Vagina (tissue), 2 donors: ENCODE measurements at regions of chr3 and their contacts with region 1.

Region 1: DNA sequence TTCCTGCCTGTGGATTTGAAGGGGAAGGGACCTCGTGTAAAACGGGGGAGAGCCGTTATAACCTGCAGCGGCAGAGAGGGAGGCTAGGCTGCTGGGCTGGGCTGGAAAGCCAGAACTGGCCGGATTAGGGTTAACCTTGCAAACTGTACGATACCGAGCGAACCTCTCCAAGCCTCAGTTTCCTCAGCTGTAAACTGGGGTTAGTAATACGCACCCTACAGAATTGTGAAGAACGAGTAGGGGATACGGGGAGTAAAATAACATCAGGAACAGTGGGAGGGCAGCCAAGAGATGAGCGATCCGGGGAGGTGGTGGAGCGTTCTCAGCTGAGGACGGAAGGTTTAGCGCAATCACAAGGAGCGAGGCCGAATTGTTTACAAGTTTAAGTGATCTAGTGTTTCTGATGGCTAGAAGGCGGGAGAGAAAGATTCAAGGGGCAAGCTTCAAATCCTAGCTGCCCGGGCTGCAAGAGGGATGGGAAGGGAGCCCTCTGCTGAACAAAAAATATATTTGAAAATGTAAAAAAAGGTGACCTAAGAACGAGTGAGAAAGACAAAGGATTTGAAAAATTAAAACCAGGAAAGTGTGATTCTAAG is 768 bp upstream of the SEMA5B start:
- DNase-seq: no peak
- H3K4me3 ChIP-seq: peak overlapping the region; percentile 42 to 60
- H3K27ac ChIP-seq: peak overlapping the region; percentile 3
- H3K4me1 ChIP-seq: peaks cover 23% of the 10 kb centered on the region
- H3K27me3 ChIP-seq: no peaks in the 10 kb centered on the region
- CTCF ChIP-seq: peak; percentile 6 to 39 (median 23)
- POLR2A ChIP-seq: no peak

Region 2: DNA sequence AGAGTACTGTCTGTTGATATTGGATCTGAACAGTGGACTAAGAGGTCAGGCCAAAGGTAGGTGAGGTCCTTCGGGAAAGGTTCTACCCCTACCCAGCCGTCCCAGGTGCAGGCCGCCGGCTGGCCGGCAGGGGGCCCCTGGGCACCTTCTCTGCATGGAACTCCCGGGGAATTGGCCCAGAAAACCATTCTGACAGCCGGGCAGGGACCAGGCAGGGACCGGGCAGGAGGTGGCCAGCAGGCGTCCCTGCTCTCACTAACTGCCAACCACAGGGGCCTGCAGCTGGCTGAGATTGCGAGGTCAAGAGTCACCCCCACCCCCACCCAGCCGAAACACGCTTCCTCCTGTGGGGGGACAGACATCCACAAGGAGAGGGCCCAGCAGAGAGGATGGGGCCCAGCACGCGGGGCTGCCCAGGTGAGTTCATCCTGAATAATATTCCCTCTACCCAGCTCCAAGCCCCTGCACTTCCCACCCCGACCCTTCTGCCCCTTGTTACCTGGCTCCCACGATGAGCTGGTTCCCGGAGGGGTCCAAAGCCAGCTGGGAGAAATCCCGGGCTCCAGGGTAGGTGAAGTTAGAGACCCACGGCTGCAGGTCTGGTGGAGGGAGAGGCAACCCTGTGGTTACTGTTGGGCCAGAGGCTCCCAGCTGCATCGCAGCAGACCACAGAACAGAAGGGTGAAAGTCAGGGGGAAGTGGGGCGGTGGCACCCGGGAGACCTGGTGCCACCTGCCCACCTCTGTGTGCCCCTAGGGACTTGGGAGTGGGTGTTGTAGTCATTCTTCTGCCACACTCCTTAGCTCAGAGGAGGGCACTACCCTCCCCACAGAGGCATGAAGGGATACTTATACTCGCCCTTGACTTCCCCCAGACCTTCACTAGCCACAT is 85.1 kb before region 1 on chr3:
- intact Hi-C with region 1: loop called (anchors 5 kb)
- DNase-seq: no peak
- H3K4me3 ChIP-seq: no peak overlapping the region
- H3K27ac ChIP-seq: no peak overlapping the region
- H3K4me1 ChIP-seq: no peaks in the 10 kb centered on the region
- H3K27me3 ChIP-seq: no peaks in the 10 kb centered on the region
- CTCF ChIP-seq: peak; percentile 23 to 43 (median 40)
- POLR2A ChIP-seq: no peak

Region 3: DNA sequence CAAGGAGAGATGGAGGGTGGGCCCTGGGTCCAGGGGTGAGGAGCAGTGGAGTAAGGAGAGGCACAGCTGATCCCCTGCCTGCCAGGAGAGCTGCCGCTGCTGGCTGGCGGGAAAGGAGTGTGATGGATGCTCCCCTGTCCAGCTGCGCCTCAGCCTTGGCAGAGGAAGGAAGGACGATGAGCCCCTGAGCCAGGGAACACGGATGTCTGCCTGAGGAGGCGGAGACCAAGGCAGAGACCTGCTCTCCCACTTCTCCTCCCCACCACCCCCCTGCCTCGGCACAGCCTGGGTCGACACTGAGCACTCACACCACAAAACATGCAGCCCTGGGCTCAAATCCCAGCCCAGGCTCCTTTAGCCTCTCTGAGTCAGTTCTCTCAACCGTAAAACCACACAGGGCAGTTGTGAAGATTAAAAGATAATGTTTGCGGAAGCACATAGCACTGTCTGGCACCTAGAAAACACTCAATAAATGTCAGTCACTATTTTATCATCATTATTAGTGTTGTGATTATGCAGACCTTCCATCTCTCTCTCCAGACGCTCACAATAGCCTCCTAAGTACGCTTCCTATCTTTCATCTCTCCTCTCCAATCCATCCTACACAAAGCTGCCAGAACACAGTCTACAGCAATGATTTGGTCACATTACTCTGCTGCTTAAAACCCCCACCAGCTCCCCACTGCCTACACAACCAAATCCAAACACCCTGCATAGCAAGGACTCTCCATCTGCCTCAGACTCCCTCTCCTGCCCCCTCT is 53.0 kb before region 1 on chr3:
- intact Hi-C with region 1: no loop called
- DNase-seq: no peak
- H3K4me3 ChIP-seq: no peak overlapping the region
- H3K27ac ChIP-seq: peak overlapping the region; percentile 30
- H3K4me1 ChIP-seq: peaks cover 27% of the 10 kb centered on the region
- H3K27me3 ChIP-seq: no peaks in the 10 kb centered on the region
- CTCF ChIP-seq: no peak
- POLR2A ChIP-seq: no peak

Region 4: GRCh38 chr3:123013876-123014275 is 14.5 kb before region 1 on chr3:
- intact Hi-C with region 1: no loop called
- DNase-seq: no peak
- H3K4me3 ChIP-seq: no peak overlapping the region
- H3K27ac ChIP-seq: no peak overlapping the region
- H3K4me1 ChIP-seq: no peaks in the 10 kb centered on the region
- H3K27me3 ChIP-seq: no peaks in the 10 kb centered on the region
- CTCF ChIP-seq: no peak
- POLR2A ChIP-seq: no peak

Region 5: GRCh38 chr3:123104550-123104949 is 76.2 kb after region 1 on chr3:
- intact Hi-C with region 1: no loop called
- DNase-seq: no peak
- H3K4me3 ChIP-seq: no peak overlapping the region
- H3K27ac ChIP-seq: no peak overlapping the region
- H3K4me1 ChIP-seq: no peaks in the 10 kb centered on the region
- H3K27me3 ChIP-seq: no peaks in the 10 kb centered on the region
- CTCF ChIP-seq: no peak
- POLR2A ChIP-seq: no peak